Caco-2 (cell line): ENCODE measurements at regions of chr1 and their contacts with region 1.

Region 1: GRCh38 chr1:206982216-206982615 is 12.0 kb upstream of the FCAMR start:
- DNase-seq: peak; percentile 69 to 71
- H3K4me3 ChIP-seq: no peak overlapping the region
- H3K4me3 Mint-ChIP-seq: no peak overlapping the region
- H3K27ac Mint-ChIP-seq: no peak overlapping the region
- H3K4me1 ChIP-seq: peaks cover 18% of the 10 kb centered on the region
- H3K4me1 Mint-ChIP-seq: peaks cover 22% of the 10 kb centered on the region
- H3K27me3 ChIP-seq: no peaks in the 10 kb centered on the region
- H3K27me3 Mint-ChIP-seq: no peaks in the 10 kb centered on the region
- CTCF ChIP-seq: peak; percentile 76 to 89

Region 2: DNA sequence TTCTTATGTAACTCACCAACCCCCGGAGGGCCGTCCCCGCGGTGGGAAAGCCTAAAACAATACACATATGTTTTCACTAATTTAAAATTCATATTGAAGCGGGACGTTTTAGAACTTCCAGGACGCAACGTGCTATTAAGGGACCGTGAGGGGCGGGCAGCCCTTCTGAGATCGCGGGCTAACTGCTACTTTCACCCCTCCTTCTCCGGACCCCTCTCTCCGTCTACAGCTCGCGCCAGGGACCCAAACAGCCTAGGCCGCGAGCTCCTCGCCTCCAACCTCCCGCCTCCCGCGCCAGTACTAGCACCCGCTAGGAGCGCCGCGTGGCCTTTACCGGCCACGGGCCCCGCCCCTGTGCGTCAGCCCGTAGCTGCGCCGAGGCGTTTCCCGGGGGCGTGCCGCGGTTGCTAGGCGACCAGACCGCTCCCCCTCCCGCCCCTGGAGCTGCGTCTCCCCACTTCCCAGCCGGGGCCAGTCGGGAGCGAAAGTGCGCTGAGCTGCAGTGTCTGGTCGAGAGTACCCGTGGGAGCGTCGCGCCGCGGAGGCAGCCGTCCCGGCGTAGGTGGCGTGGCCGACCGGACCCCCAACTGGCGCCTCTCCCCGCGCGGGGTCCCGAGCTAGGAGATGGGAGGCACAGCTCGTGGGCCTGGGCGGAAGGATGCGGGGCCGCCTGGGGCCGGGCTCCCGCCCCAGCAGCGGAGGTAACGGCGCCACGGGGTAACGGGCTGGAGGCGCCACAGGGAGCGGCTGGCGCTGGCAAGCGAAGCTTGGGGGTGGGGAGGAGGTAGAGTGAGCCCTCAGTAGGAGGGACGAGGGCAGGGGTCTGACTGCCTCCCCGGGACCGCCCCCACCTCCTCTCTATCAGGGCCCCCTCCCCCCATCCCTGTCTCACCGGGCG is 346.9 kb before region 1 on chr1 and contains the start of gene DYRK3:
- CTCF ChIA-PET with region 1: interaction called, 9 read pairs
- POLR2A ChIA-PET with region 1: no interaction called
- intact Hi-C with region 1: loop called (anchors 1 kb)
- DNase-seq: peak; percentile 89 to 90
- H3K4me3 ChIP-seq: peak within 1 kb of the TSS; percentile 86
- H3K4me3 Mint-ChIP-seq: peak within 1 kb of the TSS; percentile 78
- H3K27ac Mint-ChIP-seq: peak within 1 kb of the TSS; percentile 74
- H3K4me1 ChIP-seq: no peaks in the 10 kb centered on the region
- H3K4me1 Mint-ChIP-seq: peaks cover 7% of the 10 kb centered on the region
- H3K27me3 ChIP-seq: no peaks in the 10 kb centered on the region; the same call in 1 of the 2 replicates
- H3K27me3 Mint-ChIP-seq: no peaks in the 10 kb centered on the region
- CTCF ChIP-seq: no peak
- total RNA-seq, gene DYRK3: 0.16 TPM in 1 of 2 replicates, not detected in the other

Region 3: DNA sequence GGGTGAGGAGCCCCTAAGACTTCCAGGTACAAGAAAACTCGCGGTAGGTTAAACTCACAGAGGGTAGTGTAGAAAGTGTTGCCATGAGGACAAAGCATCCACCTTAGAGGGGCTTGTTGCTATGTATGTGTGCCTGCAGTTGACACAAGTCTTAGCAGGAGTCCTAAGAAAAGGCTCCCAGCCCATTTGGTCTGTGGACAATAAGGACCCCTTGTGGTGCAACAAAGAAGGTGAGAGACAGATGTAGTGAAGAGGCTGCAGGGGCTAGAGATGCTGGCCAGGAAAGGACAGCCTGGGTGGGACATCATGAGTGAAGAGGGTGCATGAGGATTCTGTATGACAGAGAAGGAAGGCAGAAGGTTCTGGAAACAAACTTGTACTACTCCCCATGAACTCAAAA is 173.6 kb before region 1 on chr1:
- CTCF ChIA-PET with region 1: interaction called, 13 read pairs
- POLR2A ChIA-PET with region 1: no interaction called
- intact Hi-C with region 1: loop called (anchors 1 kb)
- DNase-seq: peak; percentile 46 to 57
- H3K4me3 ChIP-seq: no peak overlapping the region
- H3K4me3 Mint-ChIP-seq: no peak overlapping the region
- H3K27ac Mint-ChIP-seq: no peak overlapping the region
- H3K4me1 ChIP-seq: no peaks in the 10 kb centered on the region
- H3K4me1 Mint-ChIP-seq: no peaks in the 10 kb centered on the region
- H3K27me3 ChIP-seq: no peaks in the 10 kb centered on the region
- H3K27me3 Mint-ChIP-seq: no peaks in the 10 kb centered on the region
- CTCF ChIP-seq: peak; percentile 48 to 59

Region 4: DNA sequence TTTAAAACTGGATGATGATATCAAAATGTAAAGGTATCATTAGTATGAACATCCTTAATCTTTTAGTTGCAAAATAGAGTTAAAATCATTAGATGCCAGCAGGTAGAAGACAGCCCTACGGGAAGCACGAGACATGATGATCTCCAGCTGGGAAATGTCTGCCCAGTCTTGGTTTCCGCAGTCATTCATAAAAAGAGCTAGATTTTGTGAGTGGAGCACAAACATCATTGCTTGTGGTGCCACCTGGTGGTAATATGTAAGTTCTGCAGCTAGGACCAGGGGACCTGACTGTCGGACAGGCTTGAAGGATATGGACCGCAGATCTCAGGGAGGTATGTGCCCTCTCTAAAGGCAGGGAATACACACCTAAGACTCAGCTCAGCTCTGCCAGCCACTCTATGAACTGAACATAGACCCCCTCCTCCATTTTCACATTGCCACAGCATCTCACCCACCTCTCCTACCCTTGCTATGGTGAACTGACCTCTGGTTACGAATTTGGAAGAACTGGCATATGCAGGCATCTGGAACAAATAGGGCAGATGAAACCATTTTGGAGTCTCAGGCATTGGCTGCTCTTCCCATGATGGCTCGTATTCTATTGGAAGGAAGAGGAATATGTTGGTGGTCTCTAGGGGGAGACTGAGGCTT is 69.6 kb before region 1 on chr1:
- CTCF ChIA-PET with region 1: interaction called, 68 read pairs
- POLR2A ChIA-PET with region 1: no interaction called
- intact Hi-C with region 1: loop called (anchors 1 kb)
- DNase-seq: peak; percentile 82 to 83
- H3K4me3 ChIP-seq: no peak overlapping the region
- H3K4me3 Mint-ChIP-seq: no peak overlapping the region
- H3K27ac Mint-ChIP-seq: no peak overlapping the region
- H3K4me1 ChIP-seq: 0 out of 2 replicates have a peak, but pooled peaks cover 3% of the 10 kb centered on the region
- H3K4me1 Mint-ChIP-seq: peaks cover 12% of the 10 kb centered on the region
- H3K27me3 ChIP-seq: peaks cover 2% of the 10 kb centered on the region; the same call in 1 of the 2 replicates
- H3K27me3 Mint-ChIP-seq: peaks cover 20% of the 10 kb centered on the region
- CTCF ChIP-seq: peak; percentile 75 to 81

Region 5: DNA sequence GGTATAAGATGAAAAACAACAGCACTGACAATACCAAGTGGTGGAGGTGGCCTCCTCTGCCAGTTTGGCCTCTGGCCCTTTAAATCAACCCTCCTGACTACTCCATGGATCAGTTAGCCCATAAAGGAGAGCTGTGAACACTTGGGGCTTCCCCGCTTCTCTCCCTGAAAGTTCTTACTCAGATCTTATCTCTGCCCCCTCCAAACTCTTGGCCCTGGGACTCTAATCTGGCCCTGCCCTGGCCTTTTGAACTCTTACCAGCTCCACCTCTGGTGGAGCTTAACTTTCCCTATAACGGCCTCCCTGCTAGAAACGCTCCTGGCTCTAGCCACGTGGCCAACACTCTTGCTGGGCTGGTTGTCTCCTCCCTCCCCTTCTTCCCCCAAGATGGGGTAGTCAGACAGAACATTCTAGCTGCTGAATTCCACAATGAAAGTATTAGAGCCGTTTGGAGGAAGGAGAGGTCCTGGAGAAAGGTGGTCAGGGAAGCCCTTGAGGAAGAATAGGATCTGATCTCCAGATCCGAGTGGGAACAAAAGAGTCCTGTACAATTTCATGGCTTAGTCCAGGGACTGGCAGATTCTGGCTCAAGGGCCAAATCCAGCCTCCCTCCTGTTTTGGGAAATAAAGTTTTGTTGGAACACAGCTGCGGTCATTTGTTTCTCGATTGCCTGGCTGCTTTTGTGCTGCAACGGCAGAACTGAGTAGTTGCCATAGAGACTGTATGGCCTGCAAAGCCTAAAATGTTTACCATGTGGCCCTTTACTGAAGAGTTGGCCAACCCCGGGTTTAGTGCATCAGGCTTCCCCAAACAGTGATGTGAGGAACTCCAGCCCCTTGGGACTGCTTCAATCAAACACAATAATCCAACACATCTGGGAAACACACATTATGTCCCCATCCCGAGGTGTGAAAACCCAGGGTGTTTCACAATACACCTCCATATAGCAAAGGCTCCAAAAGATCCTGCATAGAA is 26.5 kb before region 1 on chr1:
- CTCF ChIA-PET with region 1: interaction called, 10 read pairs
- POLR2A ChIA-PET with region 1: no interaction called
- intact Hi-C with region 1: loop called (anchors 1 kb)
- DNase-seq: peak; percentile 32 to 65
- H3K4me3 ChIP-seq: no peak overlapping the region
- H3K4me3 Mint-ChIP-seq: peak overlapping the region; percentile 29
- H3K27ac Mint-ChIP-seq: peak overlapping the region; percentile 36
- H3K4me1 ChIP-seq: peaks cover 52% of the 10 kb centered on the region
- H3K4me1 Mint-ChIP-seq: peaks cover 41% of the 10 kb centered on the region
- H3K27me3 ChIP-seq: no peaks in the 10 kb centered on the region
- H3K27me3 Mint-ChIP-seq: no peaks in the 10 kb centered on the region
- CTCF ChIP-seq: no peak

Region 6: DNA sequence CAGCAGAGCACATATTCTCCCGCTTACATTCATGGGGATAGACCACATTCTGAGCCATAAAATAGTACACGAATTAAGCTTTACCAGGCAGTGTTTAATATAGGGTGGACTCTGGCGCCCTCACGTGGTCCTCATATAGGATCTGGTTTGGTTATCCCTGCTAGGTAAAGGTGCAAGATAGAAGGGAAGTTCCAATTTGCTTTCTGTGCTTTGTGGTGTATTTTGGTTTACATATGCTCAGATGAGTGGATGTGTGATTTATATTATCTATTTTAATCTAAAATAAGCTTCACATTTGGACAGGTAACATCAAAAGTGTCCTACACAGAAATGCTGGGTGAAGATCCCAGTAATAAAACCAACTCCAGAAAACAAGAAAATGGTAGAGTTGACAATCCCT is 517.4 kb after region 1 on chr1:
- CTCF ChIA-PET with region 1: no interaction called
- POLR2A ChIA-PET with region 1: no interaction called
- intact Hi-C with region 1: loop called (anchors 5 kb)
- DNase-seq: peak; percentile 56 to 57
- H3K4me3 ChIP-seq: no peak overlapping the region
- H3K4me3 Mint-ChIP-seq: no peak overlapping the region
- H3K27ac Mint-ChIP-seq: no peak overlapping the region
- H3K4me1 ChIP-seq: no peaks in the 10 kb centered on the region
- H3K4me1 Mint-ChIP-seq: no peaks in the 10 kb centered on the region
- H3K27me3 ChIP-seq: no peaks in the 10 kb centered on the region; the same call in 1 of the 2 replicates
- H3K27me3 Mint-ChIP-seq: peaks cover 26% of the 10 kb centered on the region
- CTCF ChIP-seq: peak; percentile 69 to 70